Vagina (tissue), 2 donors: ENCODE measurements at regions of chr16 and their contacts with region 1.

Region 1: GRCh38 chr16:22297114-22297878 is at the start of gene POLR3E:
- DNase-seq: peak; percentile 97 to 99
- H3K4me3 ChIP-seq: peak within 1 kb of the TSS; percentile 65 to 96
- H3K27ac ChIP-seq: peak within 1 kb of the TSS; percentile 97
- H3K4me1 ChIP-seq: peaks cover 25% of the 10 kb centered on the region
- H3K27me3 ChIP-seq: no peaks in the 10 kb centered on the region
- CTCF ChIP-seq: peak; percentile 91 to 99 (median 96)
- POLR2A ChIP-seq: peak in 1 of 2 donors; percentile 60
- total RNA-seq, gene POLR3E: 38.5 TPM

Region 2: GRCh38 chr16:21005008-21005407 is 1292.3 kb before region 1 on chr16:
- intact Hi-C with region 1: no loop called
- DNase-seq: no peak
- H3K4me3 ChIP-seq: no peak overlapping the region
- H3K27ac ChIP-seq: no peak overlapping the region
- H3K4me1 ChIP-seq: no peaks in the 10 kb centered on the region
- H3K27me3 ChIP-seq: no peaks in the 10 kb centered on the region
- CTCF ChIP-seq: no peak
- POLR2A ChIP-seq: no peak

Region 3: DNA sequence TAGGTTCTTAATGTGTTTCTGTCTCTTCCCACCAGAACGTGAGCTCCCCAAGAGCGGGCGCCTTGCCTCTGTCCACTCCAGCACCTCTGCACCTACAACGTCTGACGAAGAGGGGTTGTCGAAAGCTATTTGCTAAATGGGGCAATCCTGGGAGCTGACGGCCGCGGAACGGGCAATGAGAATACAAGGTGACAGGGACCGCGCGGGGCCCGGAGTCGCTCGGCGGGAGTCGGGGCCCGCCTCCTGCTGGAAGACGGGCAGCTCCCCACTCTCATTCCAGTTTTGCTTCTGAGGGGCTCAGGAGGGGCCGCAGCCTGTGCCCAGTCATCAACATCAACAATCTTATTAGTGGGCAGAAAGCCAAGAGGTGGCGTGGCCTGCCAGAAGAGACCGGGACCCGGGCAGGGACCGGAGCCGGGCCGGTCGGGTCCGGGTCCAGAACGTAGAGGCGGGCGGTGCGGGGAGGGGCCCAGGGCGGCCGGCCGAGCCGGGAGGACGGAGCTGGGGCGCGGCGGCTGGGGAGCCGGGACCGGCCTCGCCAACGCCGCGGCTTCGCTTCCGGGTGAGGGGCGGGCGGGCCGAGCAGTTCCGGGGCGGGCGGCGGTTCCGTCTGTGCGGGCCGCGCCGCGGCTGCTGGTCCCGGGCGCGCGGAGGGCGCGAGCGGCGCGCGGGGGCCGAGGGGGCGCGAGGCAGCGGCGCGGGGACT is 289.6 kb before region 1 on chr16 and contains the start of gene MOSMO:
- intact Hi-C with region 1: loop called (anchors 5 kb)
- DNase-seq: no peak
- H3K4me3 ChIP-seq: peak within 1 kb of the TSS; percentile 85 to 93
- H3K27ac ChIP-seq: peak within 1 kb of the TSS; percentile 83
- H3K4me1 ChIP-seq: peaks cover 29% of the 10 kb centered on the region
- H3K27me3 ChIP-seq: no peaks in the 10 kb centered on the region
- CTCF ChIP-seq: no peak
- POLR2A ChIP-seq: no peak
- total RNA-seq, gene MOSMO: 33.9 TPM

Region 4: GRCh38 chr16:22195695-22196558 is 101.4 kb before region 1 on chr16:
- intact Hi-C with region 1: loop called (anchors 2 kb)
- DNase-seq: peak in 1 of 2 donors; percentile 96
- H3K4me3 ChIP-seq: peak overlapping the region; percentile 27 to 50
- H3K27ac ChIP-seq: peak overlapping the region; percentile 90
- H3K4me1 ChIP-seq: peaks cover 49% of the 10 kb centered on the region
- H3K27me3 ChIP-seq: no peaks in the 10 kb centered on the region
- CTCF ChIP-seq: peak; percentile 88 to 100 (median 92)
- POLR2A ChIP-seq: peak in 1 of 2 donors; percentile 14